ENCODE measurements at regions of chr10 and their contacts with region 1.

Region 1: DNA sequence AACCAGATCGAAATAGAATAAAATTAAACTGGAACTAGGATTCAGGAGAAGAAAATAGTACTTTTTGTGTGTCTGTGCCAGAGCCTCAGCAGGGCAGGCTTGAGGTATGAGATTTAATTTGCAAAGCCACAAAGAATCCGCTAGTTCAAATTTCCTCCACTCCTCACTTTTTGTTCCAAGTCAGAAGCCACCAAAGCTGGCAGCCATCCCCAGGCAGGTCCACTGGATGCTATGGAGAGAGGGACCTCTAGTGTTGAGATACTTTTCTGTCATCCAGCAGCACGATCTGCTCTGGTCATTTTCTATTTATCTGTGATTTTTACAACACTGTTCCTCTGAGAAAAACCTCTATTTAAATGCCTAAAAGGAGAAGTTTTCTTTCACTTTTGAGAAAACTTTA is 147.9 kb upstream of the FRMD4A start:
- DNase-seq: peak; percentile 43 to 87
- H3K4me3 ChIP-seq: no peak overlapping the region
- CTCF ChIP-seq: no peak
- POLR2A ChIP-seq: no peak

Region 2: DNA sequence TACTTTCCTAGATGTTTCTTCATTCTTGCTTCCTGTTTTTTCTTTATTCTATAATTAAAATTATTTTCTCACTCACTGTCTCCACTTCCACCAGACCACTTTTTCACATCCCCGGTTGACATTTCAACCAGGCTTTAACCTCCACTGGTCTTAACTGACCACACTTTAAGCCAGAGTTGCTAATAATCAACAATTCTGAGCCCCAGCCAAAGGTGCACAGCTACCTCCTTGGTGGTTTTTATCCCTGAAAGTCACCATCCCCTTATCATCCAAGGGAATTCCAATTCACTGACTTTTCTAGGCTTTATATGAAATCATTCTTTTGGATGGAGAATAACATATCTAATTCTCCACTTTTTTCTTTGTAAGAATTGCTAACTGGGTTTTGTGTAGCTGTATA is 286.7 kb before region 1 on chr10:
- intact Hi-C with region 1: loop called (anchors 10 kb)
- DNase-seq: no peak
- H3K4me3 ChIP-seq: no peak overlapping the region
- CTCF ChIP-seq: no peak
- POLR2A ChIP-seq: no peak

Region 3: GRCh38 chr10:14736600-14737081 is 258.0 kb after region 1 on chr10:
- intact Hi-C with region 1: no loop called
- DNase-seq: no peak
- H3K4me3 ChIP-seq: no peak overlapping the region
- CTCF ChIP-seq: no peak
- POLR2A ChIP-seq: no peak

Region 4: DNA sequence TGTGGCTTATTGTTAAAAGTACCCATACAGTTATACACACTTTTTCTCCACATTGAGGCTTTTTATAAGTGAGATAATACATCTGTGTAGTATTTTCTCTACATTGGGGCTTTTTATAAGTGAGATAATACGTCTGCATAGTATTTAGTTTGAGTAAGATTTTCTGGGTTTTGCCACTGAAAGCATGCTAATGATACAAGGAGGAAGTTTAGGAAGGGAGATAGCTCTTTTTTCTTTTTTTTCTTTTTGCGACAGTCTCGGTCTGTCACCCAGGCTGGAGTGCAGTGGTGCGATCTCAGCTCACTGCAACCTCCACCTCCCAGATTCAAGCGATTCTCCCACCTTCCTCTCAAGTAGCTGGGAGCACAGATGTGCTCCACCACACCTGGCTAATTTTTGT is 282.8 kb after region 1 on chr10:
- intact Hi-C with region 1: no loop called
- DNase-seq: no peak
- H3K4me3 ChIP-seq: no peak overlapping the region
- CTCF ChIP-seq: no peak
- POLR2A ChIP-seq: no peak

Region 5: GRCh38 chr10:15146366-15146765 is 667.8 kb after region 1 on chr10:
- intact Hi-C with region 1: no loop called
- DNase-seq: no peak
- H3K4me3 ChIP-seq: no peak overlapping the region
- CTCF ChIP-seq: no peak
- POLR2A ChIP-seq: no peak